MCF 10A (cell line): ENCODE measurements at regions of chr16 and their contacts with region 1.

Region 1: DNA sequence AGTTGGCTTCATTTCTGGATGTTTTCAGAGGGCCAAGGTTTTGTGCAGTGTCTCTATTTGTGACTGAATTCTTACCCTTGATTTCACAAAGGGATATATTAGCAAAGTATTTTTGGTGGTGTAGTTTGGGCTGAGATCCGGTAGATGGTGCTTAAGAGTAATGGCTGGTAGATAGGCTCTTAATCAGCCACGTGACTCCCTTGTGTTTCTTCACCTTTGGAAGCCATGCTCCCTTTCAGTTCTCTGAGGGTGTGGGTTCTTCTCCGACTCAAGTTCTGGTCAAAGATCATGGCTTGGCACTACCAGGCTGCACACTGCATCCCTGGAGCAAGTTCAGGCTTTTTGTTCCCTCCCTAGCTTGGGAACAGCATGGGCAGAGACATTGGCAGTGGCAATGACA is 887.3 kb downstream of the CDH8 start:
- DNase-seq: peak; percentile 1
- H3K4me3 Mint-ChIP-seq: no peak overlapping the region
- H3K27ac Mint-ChIP-seq: no peak overlapping the region
- H3K4me1 Mint-ChIP-seq: no peaks in the 10 kb centered on the region
- H3K27me3 Mint-ChIP-seq: no peaks in the 10 kb centered on the region
- CTCF ChIP-seq: peak; percentile 23

Region 2: DNA sequence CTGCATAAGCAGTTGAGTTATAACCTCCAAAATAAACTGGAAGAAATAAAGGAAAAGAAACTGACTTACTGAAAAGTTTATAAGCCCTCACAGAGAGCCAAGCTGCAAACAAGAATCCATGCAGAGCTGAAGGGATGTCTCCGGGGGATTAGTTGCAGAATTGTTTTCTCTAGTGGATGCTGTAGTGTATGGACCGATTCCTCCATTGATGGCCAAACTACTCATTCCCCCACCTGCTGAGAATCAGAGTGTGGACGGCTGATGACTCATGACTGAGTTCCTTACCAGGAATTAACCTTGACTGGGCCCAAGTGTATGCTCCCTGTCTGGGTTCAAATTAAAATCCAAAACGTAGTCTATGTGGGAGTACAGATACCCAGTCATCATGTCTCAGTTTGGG is 981.2 kb after region 1 on chr16:
- CTCF ChIA-PET with region 1: no interaction called
- POLR2A ChIA-PET with region 1: no interaction called
- intact Hi-C with region 1: loop called (anchors 5 kb)
- DNase-seq: no peak
- H3K4me3 Mint-ChIP-seq: no peak overlapping the region
- H3K27ac Mint-ChIP-seq: no peak overlapping the region
- H3K4me1 Mint-ChIP-seq: peaks cover 8% of the 10 kb centered on the region
- H3K27me3 Mint-ChIP-seq: peaks cover 55% of the 10 kb centered on the region
- CTCF ChIP-seq: no peak